AG04449 (cell line): ENCODE measurements at regions of chr13 and their contacts with region 1.

Region 1: DNA sequence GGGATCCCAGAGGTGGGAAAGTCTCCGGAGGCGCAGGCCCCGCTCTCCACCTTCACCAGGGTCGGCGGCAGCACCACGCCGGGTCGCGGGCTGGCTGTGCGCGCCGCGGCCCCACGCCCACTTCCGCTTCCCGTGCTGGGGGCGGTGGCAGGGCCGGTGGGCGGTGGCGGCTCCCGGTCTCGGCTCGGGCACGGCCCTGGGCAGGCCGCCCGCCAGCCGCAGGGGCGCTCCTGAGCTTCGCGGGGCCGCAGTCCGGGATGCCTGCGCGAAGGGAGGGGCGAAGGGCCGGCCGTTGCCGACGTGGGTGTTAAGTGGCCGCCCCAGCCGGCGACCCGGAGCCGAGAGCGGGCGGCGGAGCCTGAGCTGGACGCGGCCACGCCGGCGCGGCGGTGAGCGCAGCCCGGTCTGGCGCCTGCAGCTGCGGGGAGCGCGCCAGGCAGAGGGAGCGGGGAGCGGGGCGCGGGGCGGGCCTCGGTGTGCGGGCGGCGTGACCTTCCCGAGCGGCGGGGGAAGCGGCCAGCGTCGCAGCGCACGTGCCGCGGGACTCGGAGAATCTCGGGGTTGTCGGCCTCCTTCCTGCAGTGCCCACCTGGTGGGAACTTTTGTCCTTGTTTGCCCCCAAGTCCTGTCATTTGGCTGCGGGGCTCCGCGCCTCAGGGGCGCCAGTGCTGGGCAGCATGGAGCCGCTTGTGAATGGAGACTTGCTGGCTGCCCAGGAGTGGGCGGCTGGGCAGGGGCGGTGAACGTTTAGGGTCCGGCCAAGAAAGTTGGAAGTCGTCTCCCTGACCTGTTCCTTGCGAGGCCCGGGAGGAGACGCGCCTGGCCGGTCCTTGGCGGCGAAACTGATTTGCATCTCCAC is at the start of gene SLC25A15:
- DNase-seq: no peak
- H3K4me3 ChIP-seq: peak within 1 kb of the TSS; percentile 70
- CTCF ChIP-seq: peak; percentile 36

Region 2: DNA sequence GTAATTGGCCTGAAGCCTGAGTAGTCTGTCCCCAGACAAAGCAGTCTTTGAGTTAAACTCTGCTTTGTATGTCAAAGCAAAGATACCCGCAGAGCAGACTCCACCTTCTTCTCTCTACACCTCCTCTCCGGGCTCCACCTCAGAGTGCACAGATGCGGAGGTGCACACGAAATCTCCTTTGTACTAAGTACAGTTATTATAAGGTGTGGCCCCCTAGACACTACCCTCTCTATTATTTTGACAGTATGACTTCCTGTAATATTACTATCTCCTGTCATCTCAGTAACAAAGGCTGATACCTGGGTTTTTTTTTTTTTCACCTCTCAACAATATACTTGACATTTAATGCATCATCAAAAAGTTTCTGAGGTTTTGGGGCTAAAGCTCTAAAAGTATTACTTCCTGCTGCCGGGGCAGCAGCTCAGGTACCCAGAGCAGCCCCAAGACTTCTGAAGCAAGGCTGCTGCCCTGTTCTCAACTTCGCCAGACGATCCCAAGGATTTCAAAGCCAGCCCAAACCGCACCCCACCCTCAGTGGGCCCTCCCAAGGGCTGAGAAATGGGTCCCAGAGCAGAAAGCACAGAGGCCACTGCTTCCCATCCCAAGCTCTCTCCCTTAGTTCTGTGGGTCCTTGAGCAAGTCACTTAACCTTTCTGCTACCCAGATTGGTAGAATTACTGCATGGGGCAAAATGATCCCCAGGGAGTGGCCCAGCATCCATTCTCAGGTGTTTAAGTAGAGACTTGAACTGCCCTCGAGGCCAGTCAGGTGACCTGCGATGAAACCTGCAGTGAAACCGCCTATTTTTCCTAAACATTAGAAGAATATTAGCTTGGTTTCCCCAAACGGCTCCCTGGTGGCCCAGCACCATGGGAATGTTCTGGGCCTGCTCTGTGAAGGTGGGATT is 303.6 kb before region 1 on chr13:
- CTCF ChIA-PET with region 1: no interaction called
- POLR2A ChIA-PET with region 1: no interaction called
- DNase-seq: no peak
- H3K4me3 ChIP-seq: no peak overlapping the region
- CTCF ChIP-seq: no peak

Region 3: GRCh38 chr13:40777166-40777808 is 12.2 kb before region 1 on chr13:
- CTCF ChIA-PET with region 1: interaction called, 25 read pairs
- POLR2A ChIA-PET with region 1: interaction called, 3 read pairs
- DNase-seq: no peak
- H3K4me3 ChIP-seq: no peak overlapping the region
- CTCF ChIP-seq: peak; percentile 33

Region 4: GRCh38 chr13:40922437-40923040 is 133.0 kb after region 1 on chr13:
- CTCF ChIA-PET with region 1: interaction called, 21 read pairs
- POLR2A ChIA-PET with region 1: no interaction called
- DNase-seq: no peak
- H3K4me3 ChIP-seq: no peak overlapping the region
- CTCF ChIP-seq: no peak